Naive thymus-derived CD8-positive, alpha-beta T cell (primary cell): ENCODE measurements at regions of chr3 and their contacts with region 1.

Region 1: GRCh38 chr3:184525337-184526087 is 36.1 kb upstream of the EPHB3 start:
- DNase-seq: peak in 3 of 10 donors; percentile 21 to 28 (median 27)
- ATAC-seq: peak; percentile 72 to 77
- H3K4me3 Mint-ChIP-seq: peak overlapping the region; percentile 82 to 92 (median 88)
- H3K27ac Mint-ChIP-seq: peak overlapping the region in 7 of 10 donors; percentile 68 to 91 (median 77)
- H3K4me1 Mint-ChIP-seq: peaks cover 0 to 14% (median 11%) of the 10 kb centered on the region in 4 donors
- H3K27me3 Mint-ChIP-seq: peaks cover 2 to 36% (median 17%) of the 10 kb centered on the region in 5 donors

Region 2: DNA sequence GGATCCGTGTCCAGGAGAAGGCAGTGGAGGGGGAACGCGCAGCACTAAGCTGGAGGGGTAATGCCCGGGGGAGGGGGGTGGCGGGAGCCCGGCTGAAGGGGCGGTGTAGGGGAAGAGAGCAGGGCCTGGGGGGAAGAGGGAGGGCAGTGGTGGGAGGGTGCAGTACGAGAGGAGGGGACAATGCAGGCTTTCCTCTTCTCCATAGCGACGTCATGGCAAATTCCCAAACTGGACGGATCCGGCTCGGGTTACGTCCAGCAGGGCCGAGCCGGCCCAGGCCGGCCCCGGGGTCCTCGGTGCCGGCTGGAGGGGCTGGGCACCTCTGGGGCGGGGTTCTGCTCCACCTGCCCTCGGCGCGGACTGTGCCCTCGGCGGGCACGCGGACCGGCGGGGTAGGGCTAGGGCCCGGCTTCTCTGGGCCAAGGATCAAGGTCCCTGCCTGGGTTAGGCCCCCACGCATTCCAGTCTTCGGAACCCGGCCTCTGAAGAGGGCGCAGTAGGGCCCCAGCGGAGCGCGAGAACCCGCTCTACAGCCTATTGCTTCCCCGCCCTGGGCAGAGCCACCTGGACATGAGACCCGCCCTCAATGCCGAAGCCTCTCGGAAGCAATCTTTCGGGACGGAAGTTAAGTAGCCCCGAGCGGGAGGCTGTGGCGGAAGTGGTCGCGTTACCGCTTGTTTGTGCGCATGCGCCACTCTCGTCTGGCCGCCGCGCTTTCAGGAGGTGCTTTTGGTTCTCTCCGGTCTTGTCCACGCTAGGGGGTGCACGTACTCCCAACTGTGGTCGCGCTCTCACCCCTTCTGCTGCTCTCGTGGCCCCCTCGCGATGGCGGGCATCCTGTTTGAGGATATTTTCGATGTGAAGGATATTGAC is 162.6 kb before region 1 on chr3:
- POLR2A ChIA-PET with region 1: interaction called, 10 read pairs
- DNase-seq: peak; percentile 79 to 96 (median 93)
- ATAC-seq: peak; percentile 80 to 84
- H3K4me3 Mint-ChIP-seq: peak overlapping the region; percentile 91 to 99 (median 98)
- H3K27ac Mint-ChIP-seq: peak overlapping the region; percentile 91 to 98 (median 96)
- H3K4me1 Mint-ChIP-seq: peaks cover 21 to 41% (median 36%) of the 10 kb centered on the region in 4 donors
- H3K27me3 Mint-ChIP-seq: peaks cover 0 to 3% (median 0%) of the 10 kb centered on the region in 5 donors

Region 3: GRCh38 chr3:184513276-184514170 is 12.0 kb before region 1 on chr3:
- POLR2A ChIA-PET with region 1: interaction called, 15 read pairs
- DNase-seq: peak; percentile 73 to 88 (median 79)
- ATAC-seq: peak; percentile 99
- H3K4me3 Mint-ChIP-seq: peak overlapping the region; percentile 35 to 83 (median 65)
- H3K27ac Mint-ChIP-seq: no peak overlapping the region
- H3K4me1 Mint-ChIP-seq: peaks cover 1 to 15% (median 12%) of the 10 kb centered on the region in 4 donors
- H3K27me3 Mint-ChIP-seq: peaks cover 24 to 81% (median 55%) of the 10 kb centered on the region in 5 donors

Region 4: GRCh38 chr3:184583578-184584425 is 58.3 kb after region 1 on chr3:
- POLR2A ChIA-PET with region 1: no interaction called
- DNase-seq: peak in 1 of 10 donors; percentile 25
- ATAC-seq: peak; percentile 73 to 85
- H3K4me3 Mint-ChIP-seq: peak overlapping the region in 9 of 10 donors; percentile 20 to 77 (median 50)
- H3K27ac Mint-ChIP-seq: peak overlapping the region in 1 of 10 donors; percentile 69
- H3K4me1 Mint-ChIP-seq: peaks cover 7 to 17% (median 11%) of the 10 kb centered on the region in 4 donors
- H3K27me3 Mint-ChIP-seq: peaks cover 14 to 41% (median 28%) of the 10 kb centered on the region in 5 donors